ENCODE measurements at regions of chr9 and their contacts with region 1.

Region 1: DNA sequence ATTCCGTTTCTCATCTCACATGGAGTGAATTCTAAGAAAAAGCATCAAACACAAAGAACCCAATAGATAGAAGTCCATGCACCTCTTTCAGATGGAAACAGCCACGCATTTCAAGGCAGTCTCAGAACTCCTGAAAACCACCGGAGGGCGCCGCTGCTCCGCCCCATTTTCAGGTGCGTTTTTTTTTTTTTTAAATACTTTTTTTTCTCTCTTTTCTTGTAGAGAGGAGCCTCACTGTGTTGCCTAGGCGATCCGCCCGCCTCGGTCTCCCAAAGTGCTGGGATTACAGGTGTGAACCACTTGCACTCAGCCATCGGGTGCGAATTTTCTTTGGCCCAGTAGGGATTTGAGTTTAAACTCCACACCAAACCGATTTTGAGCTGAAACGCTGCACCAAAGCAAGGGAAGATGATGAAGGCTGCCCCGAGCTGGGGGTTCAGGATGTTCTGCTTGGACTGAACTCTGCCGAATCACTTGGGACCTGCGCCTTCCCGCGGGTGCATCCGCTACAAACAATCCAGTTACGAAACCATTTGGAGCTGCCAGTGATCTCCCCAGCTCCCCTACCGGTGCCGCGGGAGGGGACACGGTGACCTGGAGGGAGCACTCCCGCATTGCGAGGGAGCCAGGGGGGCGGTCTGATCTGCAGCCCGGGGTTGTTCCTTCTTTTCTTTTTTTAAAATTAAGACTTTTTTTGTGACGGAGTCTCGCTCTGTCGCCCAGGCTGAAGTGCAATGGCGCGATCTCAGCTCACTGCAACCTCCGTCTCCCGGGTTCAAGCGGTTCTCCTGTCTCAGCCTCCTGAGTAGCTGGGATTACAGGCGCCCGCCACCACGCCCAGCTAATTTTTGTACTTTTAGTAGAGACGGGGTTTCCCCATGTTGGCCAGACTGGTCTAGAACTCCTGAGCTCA is 1.4 kb downstream of the PTGR1 start:
- DNase-seq: peak; percentile 72
- ATAC-seq: peak; percentile 57
- H3K4me3 Mint-ChIP-seq: peak overlapping the region; percentile 94
- H3K27ac Mint-ChIP-seq: no peak overlapping the region
- H3K4me1 Mint-ChIP-seq: peaks cover 8% of the 10 kb centered on the region
- H3K27me3 Mint-ChIP-seq: peaks cover 8% of the 10 kb centered on the region
- CTCF ChIP-seq: peak; percentile 43

Region 2: GRCh38 chr9:111621895-111622480 is 23.9 kb after region 1 on chr9:
- CTCF ChIA-PET with region 1: interaction called, 46 read pairs
- POLR2A ChIA-PET with region 1: interaction called, 3 read pairs
- DNase-seq: peak; percentile 41
- ATAC-seq: peak; percentile 98
- H3K4me3 Mint-ChIP-seq: no peak overlapping the region
- H3K27ac Mint-ChIP-seq: no peak overlapping the region
- H3K4me1 Mint-ChIP-seq: peaks cover 7% of the 10 kb centered on the region
- H3K27me3 Mint-ChIP-seq: no peaks in the 10 kb centered on the region
- CTCF ChIP-seq: peak; percentile 69

Region 3: DNA sequence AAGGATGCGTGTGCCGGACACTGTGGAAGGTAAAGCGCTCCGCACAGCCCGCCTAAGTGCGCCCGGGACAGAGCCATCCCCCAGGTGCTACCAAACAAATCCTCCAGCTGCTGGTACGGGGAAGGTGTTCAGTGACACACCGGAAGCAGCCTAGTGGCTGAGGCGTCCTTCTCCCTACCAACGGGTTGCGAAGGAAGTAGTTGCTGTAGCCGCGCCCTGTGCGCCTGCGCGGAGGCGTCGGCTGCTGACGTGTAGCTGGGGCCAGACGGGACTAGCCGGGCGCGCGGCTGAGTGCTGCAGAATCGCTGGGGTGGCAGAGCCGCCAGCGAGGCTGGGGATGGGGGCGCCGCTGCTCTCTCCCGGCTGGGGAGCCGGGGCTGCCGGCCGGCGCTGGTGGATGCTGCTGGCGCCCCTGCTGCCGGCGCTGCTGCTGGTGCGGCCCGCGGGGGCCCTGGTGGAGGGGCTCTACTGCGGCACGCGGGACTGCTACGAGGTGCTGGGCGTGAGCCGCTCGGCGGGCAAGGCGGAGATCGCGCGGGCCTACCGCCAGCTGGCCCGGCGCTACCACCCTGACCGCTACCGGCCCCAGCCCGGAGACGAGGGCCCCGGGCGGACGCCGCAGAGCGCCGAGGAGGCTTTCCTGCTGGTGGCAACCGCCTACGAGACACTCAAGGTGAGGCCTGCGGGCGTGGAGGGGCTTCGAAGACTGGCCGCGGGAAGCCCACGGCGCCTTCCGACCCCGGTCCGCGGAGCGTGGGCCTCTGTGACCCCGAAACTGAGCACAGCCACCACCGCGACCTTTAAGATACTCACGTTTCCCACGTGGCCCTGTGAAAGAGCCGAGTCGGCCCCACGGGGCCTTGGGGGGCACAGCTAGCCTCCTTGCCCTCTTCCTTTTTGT is 33.2 kb after region 1 on chr9 and contains the start of gene DNAJC25:
- CTCF ChIA-PET with region 1: interaction called, 9 read pairs
- POLR2A ChIA-PET with region 1: interaction called, 14 read pairs
- DNase-seq: peak; percentile 98
- ATAC-seq: peak; percentile 93
- H3K4me3 Mint-ChIP-seq: peak within 1 kb of the TSS; percentile 99
- H3K27ac Mint-ChIP-seq: peak within 1 kb of the TSS; percentile 98
- H3K4me1 Mint-ChIP-seq: peaks cover 33% of the 10 kb centered on the region
- H3K27me3 Mint-ChIP-seq: no peaks in the 10 kb centered on the region; the same call in 1 of the 2 replicates
- CTCF ChIP-seq: no peak
- total RNA-seq, gene DNAJC25: 6.1 to 7.4 TPM (median 6.8 TPM) in 3 replicates

Region 4: GRCh38 chr9:111691672-111692329 is 93.7 kb after region 1 on chr9:
- CTCF ChIA-PET with region 1: interaction called, 24 read pairs
- POLR2A ChIA-PET with region 1: no interaction called
- DNase-seq: no peak
- ATAC-seq: no peak
- H3K4me3 Mint-ChIP-seq: no peak overlapping the region
- H3K27ac Mint-ChIP-seq: no peak overlapping the region
- H3K4me1 Mint-ChIP-seq: peaks cover 4% of the 10 kb centered on the region
- H3K27me3 Mint-ChIP-seq: no peaks in the 10 kb centered on the region
- CTCF ChIP-seq: no peak

Region 5: DNA sequence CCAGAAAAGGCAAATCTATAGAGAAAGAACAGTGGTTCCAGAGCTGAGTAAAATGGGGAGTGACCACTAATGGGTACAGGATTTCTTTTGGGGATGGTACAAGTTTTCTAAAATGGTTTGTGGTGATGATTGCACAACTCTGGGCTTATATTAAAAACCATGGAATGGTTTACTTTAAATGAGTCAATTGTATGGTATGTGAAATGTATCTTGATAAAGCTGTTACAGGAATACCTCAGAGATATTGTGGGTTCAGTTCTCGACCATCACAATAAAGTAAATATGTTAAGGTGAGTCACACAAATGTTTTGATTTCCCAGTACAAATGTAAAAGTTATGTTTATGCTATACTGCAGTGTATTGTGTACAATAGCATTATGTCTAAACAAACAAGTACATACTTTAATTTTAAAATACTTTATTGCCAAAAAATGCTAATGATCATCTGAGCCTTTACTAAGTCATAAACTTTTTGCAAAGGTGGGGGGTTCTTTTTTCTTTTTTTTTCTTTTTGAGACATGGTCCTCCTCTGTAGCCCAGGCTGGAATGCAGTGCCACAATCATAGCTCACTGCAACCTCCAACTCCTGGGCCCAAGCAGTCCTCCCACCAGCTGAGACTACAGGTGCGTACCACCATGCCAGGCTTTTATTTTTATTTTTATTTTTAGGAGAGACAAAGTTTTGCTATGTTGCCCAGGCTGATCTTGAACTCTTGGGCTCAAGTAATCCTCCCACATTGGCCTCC is 130.7 kb after region 1 on chr9:
- CTCF ChIA-PET with region 1: no interaction called
- POLR2A ChIA-PET with region 1: no interaction called
- DNase-seq: no peak
- ATAC-seq: no peak
- H3K4me3 Mint-ChIP-seq: no peak overlapping the region
- H3K27ac Mint-ChIP-seq: no peak overlapping the region
- H3K4me1 Mint-ChIP-seq: no peaks in the 10 kb centered on the region
- H3K27me3 Mint-ChIP-seq: no peaks in the 10 kb centered on the region
- CTCF ChIP-seq: no peak

Region 6: GRCh38 chr9:111886983-111887711 is 289.1 kb after region 1 on chr9:
- CTCF ChIA-PET with region 1: no interaction called
- POLR2A ChIA-PET with region 1: no interaction called
- DNase-seq: no peak
- ATAC-seq: no peak
- H3K4me3 Mint-ChIP-seq: no peak overlapping the region
- H3K27ac Mint-ChIP-seq: no peak overlapping the region
- H3K4me1 Mint-ChIP-seq: no peaks in the 10 kb centered on the region
- H3K27me3 Mint-ChIP-seq: no peaks in the 10 kb centered on the region
- CTCF ChIP-seq: no peak

Region 7: GRCh38 chr9:112074250-112075008 is 476.4 kb after region 1 on chr9:
- CTCF ChIA-PET with region 1: interaction called, 12 read pairs
- POLR2A ChIA-PET with region 1: no interaction called
- DNase-seq: peak; percentile 57
- ATAC-seq: peak; percentile 86
- H3K4me3 Mint-ChIP-seq: no peak overlapping the region
- H3K27ac Mint-ChIP-seq: peak overlapping the region; percentile 90
- H3K4me1 Mint-ChIP-seq: peaks cover 17% of the 10 kb centered on the region
- H3K27me3 Mint-ChIP-seq: no peaks in the 10 kb centered on the region
- CTCF ChIP-seq: peak; percentile 50; the same call in 1 of the 2 replicates

Measured in WTC11 (cell line).